ENCODE measurements at regions of chr15 and their contacts with region 1.

Region 1: GRCh38 chr15:49235446-49236124 is 65.5 kb downstream of the GALK2 start:
- DNase-seq: peak; percentile 37
- CTCF ChIP-seq: peak; percentile 71

Region 2: GRCh38 chr15:48940448-48940893 is 295.1 kb before region 1 on chr15:
- in situ Hi-C with region 1: no loop called
- DNase-seq: peak; percentile 72
- CTCF ChIP-seq: no peak

Region 3: DNA sequence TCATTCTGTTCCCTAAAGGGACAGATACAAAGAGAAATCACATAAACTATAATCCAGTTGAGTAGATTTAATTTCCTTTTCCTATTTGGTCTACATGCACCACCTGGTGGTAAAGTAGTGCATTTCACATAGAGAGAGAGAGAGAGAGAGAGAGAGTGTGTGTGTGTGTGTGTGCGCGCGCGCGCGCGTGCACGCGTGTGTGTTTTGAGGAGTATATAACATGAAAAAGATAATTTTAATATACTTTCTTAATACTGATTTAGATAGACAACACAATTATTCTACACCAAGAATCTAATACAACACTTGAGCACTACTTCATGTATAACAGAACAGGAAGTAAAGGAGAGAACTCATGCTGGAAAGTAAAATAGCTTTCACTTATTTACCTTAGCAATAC is 186.4 kb after region 1 on chr15:
- in situ Hi-C with region 1: loop called (anchors 25 kb)
- DNase-seq: peak; percentile 14
- CTCF ChIP-seq: peak; percentile 64

Region 4: DNA sequence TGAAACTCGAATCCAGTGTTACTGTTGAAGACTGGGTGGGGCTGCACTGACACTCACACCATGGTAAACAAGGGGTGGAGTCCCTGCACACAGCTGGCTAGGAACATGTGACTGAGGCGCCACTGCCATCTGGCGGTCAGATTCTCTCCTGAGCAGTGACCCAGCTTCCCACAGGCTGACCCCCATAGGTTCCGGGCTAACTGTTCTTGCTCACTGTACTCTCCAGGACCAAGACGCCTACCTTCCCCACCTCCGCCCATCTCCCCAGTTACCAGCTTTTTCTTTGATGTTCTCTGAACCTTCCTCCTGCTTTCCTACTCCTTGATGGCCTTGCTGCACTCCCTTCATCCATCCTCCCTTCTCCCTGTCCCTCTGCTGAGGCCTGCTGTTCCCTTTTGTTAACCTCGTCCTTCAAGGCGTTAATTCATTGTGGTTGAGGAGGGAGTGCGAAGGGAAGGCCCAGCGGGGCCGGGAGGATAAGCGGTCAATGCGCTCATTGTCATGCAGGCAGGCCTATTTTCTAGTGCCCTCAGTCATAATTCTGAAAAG is 768.3 kb after region 1 on chr15:
- in situ Hi-C with region 1: loop called (anchors 25 kb)
- DNase-seq: peak; percentile 38
- CTCF ChIP-seq: peak; percentile 74

Region 5: GRCh38 chr15:50145451-50145872 is 909.9 kb after region 1 on chr15:
- in situ Hi-C with region 1: loop called (anchors 25 kb)
- DNase-seq: no peak
- CTCF ChIP-seq: peak; percentile 33